Heart right ventricle (tissue), 16 donors: ENCODE measurements at regions of chr6 and their contacts with region 1.

Region 1: DNA sequence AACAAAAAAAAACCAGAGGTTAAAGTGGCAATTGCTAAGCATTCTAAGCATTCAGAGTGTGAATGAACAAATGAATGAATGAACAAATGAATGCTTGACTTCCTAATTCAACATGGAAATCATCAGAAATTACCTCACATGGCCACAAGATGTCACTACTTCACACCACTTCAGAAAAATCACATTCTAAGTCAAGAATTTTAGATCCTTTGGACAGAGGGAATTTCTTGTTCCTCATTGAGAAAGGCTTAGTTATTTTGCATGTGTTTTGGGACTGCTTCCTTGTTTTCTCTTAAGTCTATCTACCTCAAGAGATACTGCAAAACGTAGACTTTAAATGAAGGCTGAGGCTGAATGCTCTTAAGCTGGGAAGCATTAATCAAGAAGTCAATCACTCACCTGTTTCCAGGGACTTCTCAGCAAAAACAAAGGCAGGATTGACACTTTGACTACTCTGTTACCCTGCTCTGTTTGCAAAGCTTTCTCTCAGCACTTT is 120.2 kb downstream of the MBOAT1 start:
- DNase-seq: no peak
- ATAC-seq: no peak
- H3K4me3 ChIP-seq: no peak overlapping the region
- H3K27ac ChIP-seq: no peak overlapping the region
- H3K4me1 ChIP-seq: peaks cover 0 to 4% (median 0%) of the 10 kb centered on the region in 9 donors
- H3K27me3 ChIP-seq: no peaks in the 10 kb centered on the region
- CTCF ChIP-seq: peak; percentile 47 to 77 (median 74)

Region 2: DNA sequence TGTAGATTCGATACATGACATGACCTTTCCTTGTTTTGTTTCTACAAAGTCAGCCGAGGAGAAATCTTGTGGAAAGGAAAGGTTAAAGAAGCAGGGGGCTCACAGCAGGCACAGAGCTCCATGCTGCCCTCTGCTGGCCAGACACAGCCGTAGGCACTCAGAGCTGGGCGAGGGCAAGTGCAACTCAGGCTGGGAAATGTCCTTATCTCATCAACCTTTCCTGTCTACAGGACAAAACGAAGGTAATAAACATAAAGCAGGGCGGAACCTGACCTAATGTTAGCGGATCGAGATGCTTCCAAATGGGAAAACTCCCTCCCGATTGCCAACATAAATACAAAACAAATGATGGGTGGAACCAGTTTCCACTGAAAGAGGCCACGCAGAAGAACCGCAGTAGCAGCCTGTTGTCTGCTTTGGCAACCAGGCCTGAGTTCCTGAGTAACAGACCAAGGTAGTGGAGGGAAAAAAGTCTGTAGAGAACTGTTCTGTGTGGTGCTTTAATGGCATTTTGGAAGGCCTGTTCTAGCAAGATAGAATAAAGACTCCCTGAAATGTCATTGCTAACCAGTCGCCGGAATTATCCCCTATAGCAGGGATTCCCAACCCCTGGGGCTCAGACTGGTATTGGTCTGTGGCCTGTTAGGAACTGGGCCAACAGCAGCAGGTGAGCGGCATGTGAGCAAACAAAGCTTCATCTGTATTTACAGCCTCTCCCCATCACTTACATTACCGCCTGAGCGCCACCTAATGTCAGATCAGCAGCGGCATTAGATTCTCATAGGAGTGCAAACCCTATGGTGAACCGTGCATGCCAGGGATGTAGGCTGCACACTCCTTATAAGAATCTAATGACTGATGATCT is 34.9 kb after region 1 on chr6:
- intact Hi-C with region 1: loop called in 2 of 10 experiments (anchors 5 kb)
- DNase-seq: peak; percentile 51 to 76
- ATAC-seq: peak; percentile 74 to 96 (median 92)
- H3K4me3 ChIP-seq: no peak overlapping the region
- H3K27ac ChIP-seq: peak overlapping the region in 3 of 10 donors; percentile 8 to 36 (median 10)
- H3K4me1 ChIP-seq: peaks cover 0 to 26% (median 10%) of the 10 kb centered on the region in 9 donors
- H3K27me3 ChIP-seq: no peaks in the 10 kb centered on the region
- CTCF ChIP-seq: peak; percentile 81 to 97 (median 93)

Region 3: DNA sequence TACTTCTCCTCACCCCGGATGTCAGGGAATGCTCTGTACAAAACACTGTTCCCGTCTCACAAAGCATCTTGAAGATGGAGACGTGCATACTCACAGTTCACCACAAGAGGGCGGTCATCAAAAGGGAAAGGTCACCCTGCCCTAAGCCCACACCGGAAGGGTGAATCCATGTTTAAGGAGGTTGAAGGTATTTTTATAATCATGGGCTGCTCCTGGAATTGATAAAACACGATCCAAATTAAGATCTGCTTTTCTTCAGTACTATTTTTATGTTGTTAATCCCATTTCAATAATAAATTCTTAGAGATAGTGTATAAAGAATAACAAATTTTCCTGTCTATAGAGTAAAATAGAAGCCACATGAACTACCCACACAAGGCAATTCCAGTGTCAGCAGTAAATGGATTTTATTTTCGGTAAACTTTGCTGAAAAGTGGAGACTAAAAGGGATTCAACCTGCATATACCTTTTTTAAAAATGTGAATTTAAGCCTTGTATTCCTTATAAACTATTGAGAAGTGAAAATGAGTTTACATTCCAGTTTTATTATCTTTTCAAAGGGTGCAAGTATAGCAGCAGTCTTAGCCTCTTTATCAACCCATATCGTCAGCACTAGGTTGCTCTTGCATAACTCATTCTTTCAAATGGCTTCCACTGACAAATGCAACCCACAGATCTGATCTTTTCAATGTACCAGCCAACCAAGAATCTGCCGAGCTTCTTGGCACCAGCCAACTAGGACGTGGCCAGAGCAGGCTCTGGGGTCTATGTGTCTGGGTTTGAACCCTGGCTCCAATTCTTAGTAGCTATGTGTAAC is 199.9 kb after region 1 on chr6:
- intact Hi-C with region 1: loop called in 4 of 10 experiments (anchors 5 to 10 kb)
- DNase-seq: peak; percentile 24 to 80
- ATAC-seq: peak; percentile 78 to 93 (median 86)
- H3K4me3 ChIP-seq: no peak overlapping the region
- H3K27ac ChIP-seq: no peak overlapping the region
- H3K4me1 ChIP-seq: peaks cover 0 to 9% (median 3%) of the 10 kb centered on the region in 9 donors
- H3K27me3 ChIP-seq: no peaks in the 10 kb centered on the region
- CTCF ChIP-seq: peak; percentile 81 to 96 (median 93)

Region 4: GRCh38 chr6:20534295-20535262 is 442.5 kb after region 1 on chr6 and contains the start of gene CDKAL1:
- intact Hi-C with region 1: loop called in 9 of 10 experiments (anchors 2 to 5 kb)
- DNase-seq: peak; percentile 87 to 94
- ATAC-seq: peak; percentile 88 to 96 (median 94)
- H3K4me3 ChIP-seq: peak within 1 kb of the TSS; percentile 68 to 100 (median 88)
- H3K27ac ChIP-seq: peak within 1 kb of the TSS in 9 of 10 donors; percentile 72 to 93 (median 84)
- H3K4me1 ChIP-seq: peaks cover 0 to 19% (median 17%) of the 10 kb centered on the region in 9 donors
- H3K27me3 ChIP-seq: no peaks in the 10 kb centered on the region
- CTCF ChIP-seq: no peak
- total RNA-seq, gene CDKAL1: 10.4 to 14.0 (median 11.1) TPM